ENCODE measurements at regions of chr3 and their contacts with region 1.

Region 1: GRCh38 chr3:51670823-51671733 is at the start of gene TEX264:
- DNase-seq: peak; percentile 89 to 95 (median 92)
- H3K4me3 ChIP-seq: peak within 1 kb of the TSS; percentile 57 to 100 (median 88)
- H3K27ac ChIP-seq: peak within 1 kb of the TSS; percentile 90 to 96 (median 93)
- H3K4me1 ChIP-seq: peaks cover 14 to 41% of the 10 kb centered on the region in 2 donors
- H3K27me3 ChIP-seq: no peaks in the 10 kb centered on the region
- CTCF ChIP-seq: no peak
- POLR2A ChIP-seq: peak; percentile 65 to 85
- total RNA-seq, gene TEX264: 64.7 to 207 (median 124) TPM

Region 2: GRCh38 chr3:51391075-51391567 is 280.0 kb before region 1 on chr3 and contains the start of gene RBM15B:
- intact Hi-C with region 1: loop called in 1 of 2 experiments (anchors 10 kb)
- DNase-seq: peak; percentile 98 to 99 (median 98)
- H3K4me3 ChIP-seq: peak within 1 kb of the TSS; percentile 25 to 99 (median 50)
- H3K27ac ChIP-seq: peak within 1 kb of the TSS; percentile 53 to 97 (median 82)
- H3K4me1 ChIP-seq: peaks cover 14 to 75% of the 10 kb centered on the region in 2 donors
- H3K27me3 ChIP-seq: no peaks in the 10 kb centered on the region
- CTCF ChIP-seq: peak in 4 of 6 experiments; percentile 76 to 95 (median 90)
- POLR2A ChIP-seq: peak; percentile 85 to 90
- total RNA-seq, gene RBM15B: 10.4 to 36.6 (median 27.0) TPM

Region 3: DNA sequence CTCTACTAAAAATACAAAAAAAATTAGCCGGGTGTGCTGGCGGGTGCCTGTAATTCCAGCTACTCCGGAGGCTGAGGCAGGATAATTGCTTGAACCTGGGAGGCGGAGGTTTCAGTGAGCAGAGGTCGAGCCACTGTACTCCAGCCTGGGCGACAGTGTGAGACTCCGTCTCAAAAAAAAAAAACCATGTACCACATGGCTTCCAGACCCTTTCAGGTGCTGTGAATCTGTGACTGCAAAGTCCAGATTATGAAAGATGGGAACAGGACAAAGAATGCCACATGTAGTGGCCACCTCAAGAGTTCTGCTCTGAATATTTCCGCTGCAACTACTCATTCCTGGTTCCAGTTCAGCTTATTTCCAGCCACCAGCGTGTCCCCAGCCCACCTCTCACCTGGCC is 162.8 kb before region 1 on chr3:
- intact Hi-C with region 1: loop called (anchors 2 to 5 kb)
- DNase-seq: no peak
- H3K4me3 ChIP-seq: no peak overlapping the region
- H3K27ac ChIP-seq: no peak overlapping the region
- H3K4me1 ChIP-seq: no peaks in the 10 kb centered on the region
- H3K27me3 ChIP-seq: no peaks in the 10 kb centered on the region
- CTCF ChIP-seq: no peak
- POLR2A ChIP-seq: no peak